ENCODE measurements at regions of chr7 and their contacts with region 1.

Region 1: GRCh38 chr7:92590711-92591310 is 621 bp upstream of the FAM133B start:
- DNase-seq: no peak
- H3K4me3 Mint-ChIP-seq: peak overlapping the region; percentile 97
- H3K27ac Mint-ChIP-seq: peak overlapping the region; percentile 30
- H3K4me1 Mint-ChIP-seq: peaks cover 35% of the 10 kb centered on the region
- H3K27me3 Mint-ChIP-seq: no peaks in the 10 kb centered on the region

Region 2: GRCh38 chr7:92192326-92192725 is 398.5 kb before region 1 on chr7:
- intact Hi-C with region 1: no loop called
- DNase-seq: no peak
- H3K4me3 Mint-ChIP-seq: no peak overlapping the region
- H3K27ac Mint-ChIP-seq: no peak overlapping the region
- H3K4me1 Mint-ChIP-seq: no peaks in the 10 kb centered on the region
- H3K27me3 Mint-ChIP-seq: no peaks in the 10 kb centered on the region

Region 3: DNA sequence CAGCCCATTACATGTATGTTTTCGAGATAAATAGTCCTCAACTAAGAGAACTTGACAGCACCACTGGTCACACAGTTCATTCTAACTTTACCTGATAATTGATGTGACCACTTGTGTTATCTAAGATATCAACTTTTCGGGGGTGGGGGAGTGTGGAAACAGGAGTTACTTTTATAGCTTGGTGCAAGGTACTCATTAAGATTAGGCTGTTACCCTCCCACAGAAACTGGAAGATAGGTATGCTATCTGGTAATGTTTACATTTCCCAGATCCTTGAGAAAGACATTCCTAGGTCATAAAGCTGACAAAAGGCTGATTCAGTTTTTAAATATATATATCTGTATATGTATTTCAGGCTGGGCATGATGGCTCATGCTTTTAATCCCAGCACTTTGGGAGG is 124.1 kb before region 1 on chr7:
- intact Hi-C with region 1: no loop called
- DNase-seq: no peak
- H3K4me3 Mint-ChIP-seq: no peak overlapping the region
- H3K27ac Mint-ChIP-seq: no peak overlapping the region
- H3K4me1 Mint-ChIP-seq: peaks cover under 1% of the 10 kb centered on the region
- H3K27me3 Mint-ChIP-seq: no peaks in the 10 kb centered on the region

Region 4: DNA sequence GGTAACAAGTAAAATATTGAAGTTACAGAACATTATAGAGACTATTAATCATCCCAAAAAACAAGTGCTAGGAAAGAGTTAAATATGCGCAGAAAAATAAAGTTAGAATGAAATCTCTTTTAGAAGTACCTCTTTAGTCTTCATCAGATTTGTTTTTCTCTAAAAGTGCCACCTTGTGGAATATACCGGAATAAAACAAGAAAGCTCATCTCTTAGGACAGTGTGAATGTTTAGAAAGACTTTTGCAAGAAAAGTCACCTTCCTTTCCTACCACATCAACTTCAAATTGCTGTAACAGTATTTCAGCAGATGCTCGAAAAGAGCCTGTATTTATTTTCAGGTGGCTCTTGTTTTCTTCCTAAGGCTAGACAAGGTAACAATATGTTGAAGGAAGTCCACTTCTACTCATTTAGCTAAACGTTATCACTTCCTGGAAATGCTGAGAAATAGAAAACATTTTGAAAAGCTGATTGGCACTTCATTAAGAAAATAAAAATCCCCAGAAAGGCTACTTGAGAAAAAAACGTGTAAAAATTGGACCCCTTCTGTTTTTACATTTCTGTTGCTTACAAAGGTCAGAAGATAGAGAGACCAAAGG is 19.2 kb after region 1 on chr7:
- intact Hi-C with region 1: loop called (anchors 2 kb)
- DNase-seq: no peak
- H3K4me3 Mint-ChIP-seq: no peak overlapping the region
- H3K27ac Mint-ChIP-seq: peak overlapping the region; percentile 47
- H3K4me1 Mint-ChIP-seq: peaks cover 32% of the 10 kb centered on the region
- H3K27me3 Mint-ChIP-seq: no peaks in the 10 kb centered on the region